ENCODE measurements at regions of chr11 and their contacts with region 1.

Region 1: DNA sequence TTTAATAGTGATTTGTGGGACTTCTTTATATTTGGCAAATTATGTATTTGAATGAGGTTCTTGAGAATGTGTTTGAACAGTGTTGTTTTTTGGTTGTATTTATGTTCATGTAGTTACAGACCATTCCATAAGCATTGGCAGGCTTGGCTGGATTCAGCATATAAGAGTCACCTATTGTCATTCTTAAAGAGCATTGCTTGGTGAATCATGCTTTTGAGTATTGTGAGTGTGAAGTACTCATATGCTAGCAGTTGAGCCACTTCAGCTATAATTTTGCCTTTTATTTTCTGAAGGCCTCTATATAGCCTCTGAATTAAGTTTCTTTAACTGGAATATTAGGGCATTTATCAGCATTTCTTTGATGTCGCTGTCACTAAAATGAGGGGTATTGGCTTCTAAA is 110.0 kb upstream of the GAL start:
- DNase-seq: no peak
- H3K4me3 ChIP-seq: no peak overlapping the region
- CTCF ChIP-seq: no peak
- POLR2A ChIP-seq: no peak

Region 2: GRCh38 chr11:68506908-68507307 is 67.4 kb before region 1 on chr11:
- intact Hi-C with region 1: no loop called
- DNase-seq: no peak
- H3K4me3 ChIP-seq: no peak overlapping the region
- CTCF ChIP-seq: no peak
- POLR2A ChIP-seq: no peak

Region 3: DNA sequence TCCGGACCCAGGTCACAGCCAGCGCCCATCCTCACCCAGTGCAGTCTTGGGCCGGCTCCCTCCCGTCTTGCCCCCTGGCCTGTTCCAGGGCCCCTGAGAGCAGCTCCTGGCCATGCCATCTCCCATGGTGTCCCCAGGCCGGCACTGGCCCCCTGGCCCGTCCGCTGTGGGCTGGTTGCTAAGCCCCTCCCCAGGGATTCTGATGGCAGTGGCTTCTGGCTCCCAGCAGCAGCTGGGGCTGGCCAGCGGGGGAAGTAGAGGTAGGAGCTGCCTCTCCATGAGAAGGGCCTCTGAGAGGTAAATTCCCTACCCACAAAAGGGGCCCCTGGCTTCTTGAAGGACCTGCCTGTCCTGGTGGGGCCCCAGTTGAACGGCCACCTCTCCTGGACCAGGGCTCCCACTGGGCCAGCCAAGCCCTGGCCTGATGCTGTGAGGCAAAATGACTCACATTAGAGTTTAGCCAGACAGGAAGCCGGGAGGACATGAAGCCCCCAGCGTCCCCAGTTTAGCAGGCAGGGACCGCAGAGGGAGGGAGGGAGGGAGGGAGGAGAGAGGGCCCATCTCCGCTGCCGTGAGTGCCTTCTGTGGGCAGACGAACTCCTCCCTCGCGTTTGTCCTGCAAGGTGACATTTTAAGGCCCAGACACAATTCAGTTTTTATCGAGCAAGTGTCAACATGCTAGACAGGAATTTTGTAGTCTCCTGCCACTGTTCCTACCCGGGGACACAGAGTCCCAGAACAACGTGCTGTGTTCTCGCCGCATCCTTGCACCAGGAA is 77.1 kb after region 1 on chr11:
- intact Hi-C with region 1: no loop called
- DNase-seq: no peak
- H3K4me3 ChIP-seq: no peak overlapping the region
- CTCF ChIP-seq: no peak
- POLR2A ChIP-seq: no peak

Region 4: DNA sequence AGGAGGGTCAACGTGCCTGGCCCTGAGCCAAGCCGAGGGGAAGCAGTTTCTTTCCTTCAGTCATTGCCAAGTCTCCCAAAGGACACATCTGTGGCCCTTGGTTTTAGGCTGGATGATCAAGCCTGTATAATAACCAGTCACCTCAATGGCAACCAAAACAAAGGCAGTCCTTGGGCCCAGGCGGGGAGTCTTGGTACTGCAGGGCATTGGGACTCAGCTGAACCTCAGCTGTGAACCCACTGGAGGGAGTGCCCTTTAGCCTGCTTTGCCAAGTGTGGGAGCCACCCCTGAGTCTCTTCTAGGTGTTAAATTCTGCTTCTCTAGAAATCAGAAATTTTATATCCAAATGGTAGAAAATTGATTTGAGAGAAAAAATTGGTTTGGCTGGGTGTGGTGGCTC is 230.5 kb after region 1 on chr11:
- intact Hi-C with region 1: loop called (anchors 5 kb)
- DNase-seq: no peak
- H3K4me3 ChIP-seq: no peak overlapping the region
- CTCF ChIP-seq: no peak
- POLR2A ChIP-seq: no peak

Measured in lower leg skin (tissue), 4 donors.